GM13977 (cell line): ENCODE measurements at regions of chr2 and their contacts with region 1.

Region 1: GRCh38 chr2:138787053-138787666 is 7.0 kb upstream of the NXPH2 start:
- DNase-seq: peak; percentile 32
- CTCF ChIP-seq: peak; percentile 72

Region 2: DNA sequence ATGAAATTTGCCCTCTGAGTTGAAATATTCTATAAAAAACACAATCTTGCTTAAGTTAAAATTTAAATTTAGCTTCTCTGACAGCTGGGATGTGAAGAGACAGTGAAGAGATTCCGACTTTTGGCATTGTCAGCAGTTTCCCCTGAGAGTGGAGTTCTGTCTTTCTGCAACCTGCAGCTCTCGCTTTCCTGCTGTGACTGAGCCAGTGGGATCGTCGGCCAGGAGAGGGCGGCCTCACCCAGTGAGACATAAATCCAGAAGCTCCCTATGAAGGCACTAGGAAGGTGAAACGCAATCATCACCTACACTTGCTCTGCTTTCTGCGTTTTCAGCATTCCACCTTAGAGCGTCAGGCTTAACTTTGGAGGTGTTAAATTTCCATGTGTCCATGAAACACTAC is 898.3 kb before region 1 on chr2:
- in situ Hi-C with region 1: loop called (anchors 25 kb)
- DNase-seq: no peak
- CTCF ChIP-seq: peak; percentile 30

Region 3: DNA sequence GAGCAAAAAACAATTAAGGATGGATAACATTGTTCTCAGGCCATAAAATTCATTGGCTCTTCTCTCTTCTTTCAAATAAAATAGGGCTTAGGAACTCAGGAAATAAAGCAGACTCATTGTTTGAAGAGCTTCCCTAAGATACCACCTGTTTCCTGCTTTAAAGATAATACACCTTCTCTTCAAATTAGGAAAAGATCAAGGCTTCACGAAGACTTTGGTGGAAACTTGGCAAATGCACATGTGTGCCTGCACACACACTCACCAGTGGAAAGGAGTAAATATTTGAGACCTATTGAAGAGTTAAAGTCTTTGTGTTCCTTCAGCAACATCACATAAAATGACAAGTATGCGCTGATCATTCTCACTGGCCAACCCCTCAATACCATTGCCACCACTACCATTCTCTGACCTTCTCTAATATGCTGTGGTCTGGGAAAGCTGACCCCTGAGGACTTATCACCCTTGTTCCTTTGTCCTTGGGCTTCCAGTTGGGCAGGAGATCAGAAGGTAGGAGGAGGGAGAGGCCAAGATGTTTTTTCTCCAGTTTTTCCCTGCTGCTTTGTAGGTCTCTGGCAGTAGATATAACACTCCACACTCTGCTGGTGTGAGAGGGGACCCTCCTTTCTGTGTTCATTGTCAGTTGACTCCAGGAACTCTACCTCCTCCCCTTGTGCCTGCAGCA is 339.1 kb before region 1 on chr2:
- in situ Hi-C with region 1: no loop called
- DNase-seq: no peak
- CTCF ChIP-seq: no peak